Activated CD8-positive, alpha-beta memory T cell treated with anti-CD3 and anti-CD28 coated beads, Interleukin-2, amount 10 ng/mL, durations not matched to agents 7 days and 5 days (primary cell): ENCODE measurements at regions of chr19 and their contacts with region 1.

Region 1: DNA sequence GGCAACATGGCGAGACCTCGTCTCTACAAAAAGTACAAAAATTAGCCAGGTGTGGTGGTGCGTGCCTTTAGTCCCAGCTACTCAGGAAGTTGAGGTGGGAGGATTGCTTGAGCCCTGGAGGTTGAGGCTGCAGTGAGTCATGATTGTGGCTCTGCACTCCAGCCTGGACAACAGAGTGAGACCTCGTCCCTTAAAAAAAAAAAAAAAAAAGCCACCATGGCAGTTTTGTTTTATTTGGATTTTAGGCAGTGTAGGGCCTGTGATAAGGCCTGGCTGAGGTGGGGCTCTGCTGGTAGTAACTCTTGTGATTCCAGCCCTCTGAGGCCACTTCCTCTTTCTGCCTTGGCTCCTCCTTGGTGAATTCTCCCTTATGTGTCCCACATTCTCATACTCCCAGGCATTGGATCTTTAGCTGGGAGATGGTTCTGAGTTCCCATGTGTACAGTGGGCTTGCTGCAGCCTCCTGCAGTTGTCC is 39.2 kb downstream of the GATAD2A start:
- DNase-seq: peak; percentile 68
- ATAC-seq: peak; percentile 50
- H3K4me3 Mint-ChIP-seq: peak overlapping the region; percentile 28
- H3K27ac Mint-ChIP-seq: peak overlapping the region; percentile 86
- H3K4me1 Mint-ChIP-seq: peaks cover 64% of the 10 kb centered on the region
- H3K27me3 Mint-ChIP-seq: no peaks in the 10 kb centered on the region

Region 2: DNA sequence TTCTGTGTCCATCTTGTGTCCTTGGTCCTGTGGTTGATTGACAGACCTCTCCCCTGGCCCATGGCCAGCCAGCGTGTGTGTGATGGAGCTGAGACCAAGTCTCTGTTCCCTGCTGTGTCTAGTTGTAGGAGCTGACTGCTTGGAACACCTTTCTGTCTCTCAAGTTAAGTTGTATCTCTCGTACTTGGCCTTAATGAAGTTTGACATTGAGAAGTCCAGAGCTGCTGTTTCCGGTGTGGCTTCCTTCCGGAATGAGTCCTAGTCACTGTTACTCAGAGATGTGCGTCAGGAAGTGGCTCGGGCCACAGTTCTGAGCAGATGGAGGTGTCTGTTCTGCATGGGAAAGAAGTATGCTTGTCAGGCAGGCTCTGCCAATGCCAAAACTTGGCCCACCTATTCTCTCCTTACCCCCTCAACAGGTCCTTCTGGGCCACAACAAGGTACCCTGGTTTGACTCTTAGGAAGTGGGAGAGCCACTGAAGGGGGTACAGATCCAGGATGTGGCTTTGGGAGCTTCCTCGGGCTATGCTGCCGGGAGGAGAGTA is 15.1 kb after region 1 on chr19:
- CTCF ChIA-PET with region 1: interaction called, 15 read pairs
- DNase-seq: peak; percentile 89
- ATAC-seq: peak; percentile 73
- H3K4me3 Mint-ChIP-seq: peak overlapping the region; percentile 68
- H3K27ac Mint-ChIP-seq: peak overlapping the region; percentile 90
- H3K4me1 Mint-ChIP-seq: peaks cover 73% of the 10 kb centered on the region
- H3K27me3 Mint-ChIP-seq: no peaks in the 10 kb centered on the region